SK-N-SH (cell line): ENCODE measurements at regions of chr11 and their contacts with region 1.

Region 1: GRCh38 chr11:16785520-16786128 is 47.2 kb downstream of the C11orf58 start:
- DNase-seq: peak; percentile 84
- H3K4me3 ChIP-seq: peak overlapping the region in 1 of 2 experiments; percentile 7; a peak in 1 of 4 replicates
- H3K27ac ChIP-seq: no peak overlapping the region
- H3K4me1 ChIP-seq: peaks cover 0 to 5% of the 10 kb centered on the region in 2 experiments; a peak in 2 of 4 replicates
- H3K27me3 ChIP-seq: no peaks in the 10 kb centered on the region
- CTCF ChIP-seq: peak; percentile 89
- EP300 ChIP-seq: no peak
- RAD21 ChIP-seq: peak; percentile 87

Region 2: GRCh38 chr11:16605894-16606783 is 179.5 kb before region 1 on chr11:
- CTCF ChIA-PET with region 1: no interaction called
- POLR2A ChIA-PET with region 1: no interaction called
- DNase-seq: peak; percentile 85
- H3K4me3 ChIP-seq: peak overlapping the region; percentile 62 to 73
- H3K27ac ChIP-seq: peak overlapping the region in 1 of 2 experiments; percentile 44; a peak in 2 of 4 replicates
- H3K4me1 ChIP-seq: peaks cover 0 to 19% of the 10 kb centered on the region in 2 experiments; a peak in 2 of 4 replicates
- H3K27me3 ChIP-seq: peaks cover 47% of the 10 kb centered on the region
- CTCF ChIP-seq: peak; percentile 98
- EP300 ChIP-seq: no peak
- RAD21 ChIP-seq: peak; percentile 81

Region 3: GRCh38 chr11:16703795-16704194 is 81.8 kb before region 1 on chr11:
- CTCF ChIA-PET with region 1: no interaction called
- POLR2A ChIA-PET with region 1: no interaction called
- DNase-seq: no peak
- H3K4me3 ChIP-seq: no peak overlapping the region
- H3K27ac ChIP-seq: no peak overlapping the region
- H3K4me1 ChIP-seq: no peaks in the 10 kb centered on the region
- H3K27me3 ChIP-seq: no peaks in the 10 kb centered on the region
- CTCF ChIP-seq: no peak
- EP300 ChIP-seq: no peak
- RAD21 ChIP-seq: no peak

Region 4: GRCh38 chr11:16759857-16760256 is 25.8 kb before region 1 on chr11:
- CTCF ChIA-PET with region 1: interaction called, 22 read pairs
- POLR2A ChIA-PET with region 1: no interaction called
- DNase-seq: no peak
- H3K4me3 ChIP-seq: no peak overlapping the region
- H3K27ac ChIP-seq: peak overlapping the region in 1 of 2 experiments; percentile 60; a peak in 2 of 4 replicates
- H3K4me1 ChIP-seq: no peaks in the 10 kb centered on the region; a peak in 1 of 4 replicates
- H3K27me3 ChIP-seq: no peaks in the 10 kb centered on the region
- CTCF ChIP-seq: no peak
- EP300 ChIP-seq: no peak
- RAD21 ChIP-seq: no peak

Region 5: DNA sequence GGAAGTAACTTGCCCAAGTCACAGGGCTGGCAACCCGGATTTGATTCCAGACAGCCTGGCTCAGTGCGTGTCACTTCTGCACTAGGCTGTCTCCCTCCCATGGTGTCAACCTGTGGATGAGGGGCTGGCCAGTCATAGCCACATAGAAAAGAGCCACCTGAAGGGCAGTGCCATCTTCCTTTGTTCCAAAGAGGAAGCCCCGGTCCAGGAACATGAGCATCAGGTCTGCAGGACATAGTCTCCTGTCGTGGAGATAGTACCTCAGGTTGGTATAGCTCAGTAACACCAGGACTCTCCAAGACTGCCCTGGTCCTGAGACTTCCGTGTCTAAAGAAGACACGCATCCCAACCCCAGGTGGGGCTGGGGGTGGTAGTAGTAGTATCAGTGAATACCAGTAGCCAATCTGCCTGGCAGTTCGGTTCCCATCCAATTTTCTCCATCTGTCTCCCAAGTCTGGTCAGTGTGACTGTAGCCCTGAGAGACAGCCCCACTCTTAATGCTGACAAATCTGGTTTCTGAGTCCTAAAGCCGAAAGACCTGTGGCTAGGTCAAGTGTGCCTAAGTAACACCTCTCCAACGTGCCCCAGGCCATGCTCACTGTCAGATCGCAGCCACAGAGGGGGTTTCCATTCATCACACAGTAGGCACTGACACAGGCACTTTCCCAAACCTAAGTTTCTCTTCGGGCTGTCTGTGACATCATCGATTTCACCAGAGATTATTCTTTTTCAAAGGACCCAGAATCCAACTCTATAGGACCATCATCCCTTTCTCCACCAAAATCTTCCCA is 14.1 kb before region 1 on chr11:
- CTCF ChIA-PET with region 1: interaction called, 46 read pairs
- POLR2A ChIA-PET with region 1: no interaction called
- DNase-seq: peak; percentile 1
- H3K4me3 ChIP-seq: no peak overlapping the region
- H3K27ac ChIP-seq: no peak overlapping the region
- H3K4me1 ChIP-seq: peaks cover 0 to 8% of the 10 kb centered on the region in 2 experiments; a peak in 1 of 4 replicates
- H3K27me3 ChIP-seq: no peaks in the 10 kb centered on the region
- CTCF ChIP-seq: no peak
- EP300 ChIP-seq: no peak
- RAD21 ChIP-seq: no peak

Region 6: GRCh38 chr11:16801288-16801980 is 15.8 kb after region 1 on chr11:
- CTCF ChIA-PET with region 1: interaction called, 16 read pairs
- POLR2A ChIA-PET with region 1: no interaction called
- DNase-seq: no peak
- H3K4me3 ChIP-seq: no peak overlapping the region
- H3K27ac ChIP-seq: no peak overlapping the region
- H3K4me1 ChIP-seq: peaks cover 0 to 20% of the 10 kb centered on the region in 2 experiments; a peak in 1 of 4 replicates
- H3K27me3 ChIP-seq: no peaks in the 10 kb centered on the region
- CTCF ChIP-seq: no peak
- EP300 ChIP-seq: no peak
- RAD21 ChIP-seq: no peak

Region 7: GRCh38 chr11:16809886-16810668 is 24.5 kb after region 1 on chr11:
- CTCF ChIA-PET with region 1: interaction called, 10 read pairs
- POLR2A ChIA-PET with region 1: no interaction called
- DNase-seq: no peak
- H3K4me3 ChIP-seq: no peak overlapping the region
- H3K27ac ChIP-seq: no peak overlapping the region
- H3K4me1 ChIP-seq: peaks cover 8 to 9% of the 10 kb centered on the region in 2 experiments; a peak in 1 of 4 replicates
- H3K27me3 ChIP-seq: no peaks in the 10 kb centered on the region
- CTCF ChIP-seq: no peak
- EP300 ChIP-seq: no peak
- RAD21 ChIP-seq: no peak

Region 8: DNA sequence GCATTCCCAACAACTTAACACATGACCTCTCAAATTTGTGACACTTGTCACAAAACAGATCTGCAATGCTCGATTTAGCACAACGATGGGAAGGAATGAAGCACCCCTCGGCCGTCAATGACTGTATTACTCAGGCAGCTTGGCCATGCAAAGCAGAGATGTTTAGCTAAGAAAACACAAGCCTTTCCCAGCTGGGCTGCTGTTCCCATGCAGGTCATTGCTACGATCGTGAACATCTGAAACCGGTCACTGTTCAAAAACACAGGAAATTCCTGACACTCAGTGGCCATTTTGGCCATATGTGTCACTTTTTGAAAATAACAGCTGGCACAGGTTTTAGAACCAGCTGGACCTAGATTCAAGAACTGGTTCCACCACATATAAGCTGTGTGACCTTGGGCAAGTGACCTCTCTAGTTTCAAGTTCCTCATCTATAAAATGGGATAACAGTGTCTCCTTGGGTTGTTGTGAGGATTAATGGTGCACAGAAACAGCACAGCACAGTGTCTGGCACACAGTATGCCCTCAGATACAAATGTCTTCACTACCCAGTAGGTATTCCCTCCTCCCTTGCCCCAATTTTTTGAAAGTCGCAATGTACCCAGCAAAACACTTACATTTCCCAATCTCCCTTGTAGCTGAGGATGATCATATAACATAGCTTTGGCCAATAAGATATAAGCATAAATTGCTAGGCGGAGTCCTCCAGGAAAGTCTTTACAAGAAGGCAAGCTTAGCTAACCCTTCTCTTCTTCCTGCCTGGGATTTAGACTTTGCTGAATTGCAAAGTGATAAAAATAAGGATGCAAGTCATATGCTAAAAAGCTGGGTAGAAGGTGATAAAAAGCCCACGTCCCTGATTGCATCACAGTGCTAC is 45.9 kb after region 1 on chr11:
- CTCF ChIA-PET with region 1: interaction called, 11 read pairs
- POLR2A ChIA-PET with region 1: no interaction called
- DNase-seq: no peak
- H3K4me3 ChIP-seq: no peak overlapping the region
- H3K27ac ChIP-seq: no peak overlapping the region
- H3K4me1 ChIP-seq: no peaks in the 10 kb centered on the region
- H3K27me3 ChIP-seq: no peaks in the 10 kb centered on the region; the same call in 1 of the 2 replicates
- CTCF ChIP-seq: no peak
- EP300 ChIP-seq: no peak
- RAD21 ChIP-seq: no peak

Region 9: GRCh38 chr11:16846305-16846704 is 60.7 kb after region 1 on chr11:
- CTCF ChIA-PET with region 1: interaction called, 10 read pairs
- POLR2A ChIA-PET with region 1: no interaction called
- DNase-seq: no peak
- H3K4me3 ChIP-seq: no peak overlapping the region
- H3K27ac ChIP-seq: no peak overlapping the region
- H3K4me1 ChIP-seq: no peaks in the 10 kb centered on the region
- H3K27me3 ChIP-seq: no peaks in the 10 kb centered on the region; the same call in 1 of the 2 replicates
- CTCF ChIP-seq: no peak
- EP300 ChIP-seq: no peak
- RAD21 ChIP-seq: no peak